Activated CD4-positive, alpha-beta memory T cell treated with anti-CD3 and anti-CD28 coated beads for 36 hours (primary cell): ENCODE measurements at regions of chr1 and their contacts with region 1.

Region 1: GRCh38 chr1:230978491-230979388 is at the starts of genes ARV1 and TTC13:
- DNase-seq: peak; percentile 98
- H3K4me3 Mint-ChIP-seq: peak within 1 kb of the TSS; percentile 99
- H3K27ac Mint-ChIP-seq: peak within 1 kb of the TSS; percentile 94
- H3K4me1 Mint-ChIP-seq: peaks cover 29% of the 10 kb centered on the region
- H3K27me3 Mint-ChIP-seq: no peaks in the 10 kb centered on the region
- total RNA-seq, gene ARV1: 12.7 to 13.8 TPM
- total RNA-seq, gene TTC13: 17.3 to 18.3 TPM

Region 2: GRCh38 chr1:230066466-230067404 is 912.0 kb before region 1 on chr1 and contains the start of gene GALNT2:
- CTCF ChIA-PET with region 1: no interaction called
- POLR2A ChIA-PET with region 1: no interaction called
- intact Hi-C with region 1: loop called (anchors 5 kb)
- DNase-seq: peak; percentile 92
- H3K4me3 Mint-ChIP-seq: peak within 1 kb of the TSS; percentile 86
- H3K27ac Mint-ChIP-seq: peak within 1 kb of the TSS; percentile 83
- H3K4me1 Mint-ChIP-seq: peaks cover 37% of the 10 kb centered on the region
- H3K27me3 Mint-ChIP-seq: peaks cover 2% of the 10 kb centered on the region
- total RNA-seq, gene GALNT2: 49.5 to 51.0 TPM

Region 3: DNA sequence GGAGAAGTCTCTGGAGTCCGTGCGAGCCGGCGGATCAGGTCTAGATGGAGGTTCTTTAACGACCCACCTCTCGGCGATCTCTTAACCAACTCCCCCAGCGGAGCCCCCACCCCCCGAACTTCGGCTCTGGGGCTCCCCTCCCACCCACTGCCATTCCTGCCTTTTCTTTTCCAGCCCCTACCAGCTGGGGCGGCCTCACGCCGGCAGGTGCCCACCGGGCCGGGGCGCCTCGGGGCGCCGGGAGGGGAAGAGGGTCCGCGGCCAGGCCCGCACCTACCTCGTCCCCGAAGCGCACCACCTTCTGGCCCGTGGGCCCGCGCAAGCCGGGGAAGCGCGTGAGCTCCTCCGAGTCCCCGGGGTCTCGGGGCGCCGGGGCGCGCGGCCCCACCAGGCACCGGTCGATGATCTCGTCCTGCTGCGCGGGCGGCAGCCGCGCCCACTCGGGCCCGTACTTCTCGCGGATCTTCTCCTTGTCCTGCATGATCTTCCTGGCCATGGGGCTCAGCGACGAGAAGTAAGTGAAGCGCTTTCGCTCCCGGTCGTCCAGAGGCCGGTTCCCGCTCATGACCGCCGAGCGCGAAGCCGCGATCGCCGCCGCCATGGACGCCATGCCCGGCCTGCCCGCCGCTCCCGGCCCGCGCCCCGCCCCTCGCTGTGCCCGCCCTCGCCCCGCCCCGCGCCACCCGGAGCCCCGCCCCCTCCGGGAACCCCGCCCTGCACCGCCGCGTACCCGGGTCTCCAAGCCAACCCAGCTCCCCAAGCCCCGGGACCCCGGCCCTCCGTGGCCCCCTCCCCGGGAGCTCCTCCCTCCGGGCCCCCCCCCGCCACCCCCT is 110.6 kb before region 1 on chr1 and contains the start of gene C1orf198:
- CTCF ChIA-PET with region 1: no interaction called
- POLR2A ChIA-PET with region 1: no interaction called
- intact Hi-C with region 1: loop called (anchors 5 kb)
- DNase-seq: peak; percentile 83
- H3K4me3 Mint-ChIP-seq: peak within 1 kb of the TSS; percentile 82
- H3K27ac Mint-ChIP-seq: no peak within 1 kb of the TSS
- H3K4me1 Mint-ChIP-seq: peaks cover 26% of the 10 kb centered on the region
- H3K27me3 Mint-ChIP-seq: peaks cover 24% of the 10 kb centered on the region
- total RNA-seq, gene C1orf198: 6.4 to 7.2 TPM

Region 4: GRCh38 chr1:231011360-231011759 is 32.6 kb after region 1 on chr1:
- CTCF ChIA-PET with region 1: no interaction called
- POLR2A ChIA-PET with region 1: no interaction called
- intact Hi-C with region 1: no loop called
- DNase-seq: no peak
- H3K4me3 Mint-ChIP-seq: no peak overlapping the region
- H3K27ac Mint-ChIP-seq: no peak overlapping the region
- H3K4me1 Mint-ChIP-seq: no peaks in the 10 kb centered on the region
- H3K27me3 Mint-ChIP-seq: no peaks in the 10 kb centered on the region

Region 5: GRCh38 chr1:231040019-231040799 is 61.5 kb after region 1 on chr1 and contains the start of gene FAM89A:
- CTCF ChIA-PET with region 1: interaction called, 5 read pairs
- POLR2A ChIA-PET with region 1: interaction called, 5 read pairs
- intact Hi-C with region 1: loop called (anchors 2 kb)
- DNase-seq: peak; percentile 81
- H3K4me3 Mint-ChIP-seq: peak within 1 kb of the TSS; percentile 74
- H3K27ac Mint-ChIP-seq: no peak within 1 kb of the TSS
- H3K4me1 Mint-ChIP-seq: peaks cover 29% of the 10 kb centered on the region
- H3K27me3 Mint-ChIP-seq: no peaks in the 10 kb centered on the region
- total RNA-seq, gene FAM89A: 14.3 to 15.1 TPM

Region 6: GRCh38 chr1:231121533-231121932 is 142.8 kb after region 1 on chr1:
- CTCF ChIA-PET with region 1: no interaction called
- POLR2A ChIA-PET with region 1: no interaction called
- intact Hi-C with region 1: no loop called
- DNase-seq: no peak
- H3K4me3 Mint-ChIP-seq: no peak overlapping the region
- H3K27ac Mint-ChIP-seq: no peak overlapping the region
- H3K4me1 Mint-ChIP-seq: no peaks in the 10 kb centered on the region
- H3K27me3 Mint-ChIP-seq: peaks cover 1% of the 10 kb centered on the region

Region 7: DNA sequence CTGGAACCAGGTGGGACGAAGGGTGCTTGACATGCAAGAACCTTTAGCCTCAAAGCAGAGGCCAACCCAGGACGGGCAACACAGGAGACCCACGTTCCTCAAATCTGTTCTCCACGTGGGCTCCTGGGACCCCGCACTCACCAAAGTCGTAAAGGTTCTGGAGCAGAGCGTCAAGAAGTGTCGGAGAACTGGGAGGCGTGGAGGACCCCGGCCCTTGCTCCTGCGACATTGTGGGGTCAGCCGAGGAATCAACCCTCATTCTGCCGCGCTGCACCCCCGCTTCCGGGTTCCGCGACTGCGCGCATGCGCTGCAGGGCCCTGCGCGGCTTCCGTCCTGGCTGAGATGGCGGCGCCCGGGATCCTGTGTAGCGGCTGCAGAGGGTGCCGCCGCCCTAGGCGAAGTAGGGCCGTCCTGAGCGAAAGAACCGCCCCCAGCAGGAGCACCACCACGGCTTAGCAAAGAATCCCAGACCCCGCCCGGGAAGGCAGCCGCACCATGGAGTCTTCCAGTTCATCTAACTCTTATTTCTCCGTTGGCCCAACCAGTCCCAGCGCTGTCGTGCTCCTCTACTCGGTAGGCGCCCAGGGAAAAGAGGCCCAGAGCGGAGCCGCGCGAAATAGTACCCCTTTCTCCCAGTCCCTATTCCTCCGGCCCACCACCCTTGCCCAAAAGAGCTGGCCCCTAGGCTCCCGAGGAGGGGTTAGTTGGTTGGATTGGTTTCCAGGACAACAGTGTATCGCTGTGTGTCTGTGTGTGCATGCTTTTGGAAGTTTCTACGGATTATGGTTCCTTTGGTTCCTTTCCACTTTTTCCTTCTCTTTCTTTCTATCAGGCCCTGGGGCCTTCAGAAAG is 262.4 kb after region 1 on chr1 and contains the start of gene GNPAT:
- CTCF ChIA-PET with region 1: no interaction called
- POLR2A ChIA-PET with region 1: no interaction called
- intact Hi-C with region 1: loop called (anchors 2 kb)
- DNase-seq: peak; percentile 93
- H3K4me3 Mint-ChIP-seq: peak within 1 kb of the TSS; percentile 97
- H3K27ac Mint-ChIP-seq: peak within 1 kb of the TSS; percentile 92
- H3K4me1 Mint-ChIP-seq: peaks cover 54% of the 10 kb centered on the region
- H3K27me3 Mint-ChIP-seq: no peaks in the 10 kb centered on the region
- total RNA-seq, gene GNPAT: 56.2 to 60.3 TPM

Region 8: DNA sequence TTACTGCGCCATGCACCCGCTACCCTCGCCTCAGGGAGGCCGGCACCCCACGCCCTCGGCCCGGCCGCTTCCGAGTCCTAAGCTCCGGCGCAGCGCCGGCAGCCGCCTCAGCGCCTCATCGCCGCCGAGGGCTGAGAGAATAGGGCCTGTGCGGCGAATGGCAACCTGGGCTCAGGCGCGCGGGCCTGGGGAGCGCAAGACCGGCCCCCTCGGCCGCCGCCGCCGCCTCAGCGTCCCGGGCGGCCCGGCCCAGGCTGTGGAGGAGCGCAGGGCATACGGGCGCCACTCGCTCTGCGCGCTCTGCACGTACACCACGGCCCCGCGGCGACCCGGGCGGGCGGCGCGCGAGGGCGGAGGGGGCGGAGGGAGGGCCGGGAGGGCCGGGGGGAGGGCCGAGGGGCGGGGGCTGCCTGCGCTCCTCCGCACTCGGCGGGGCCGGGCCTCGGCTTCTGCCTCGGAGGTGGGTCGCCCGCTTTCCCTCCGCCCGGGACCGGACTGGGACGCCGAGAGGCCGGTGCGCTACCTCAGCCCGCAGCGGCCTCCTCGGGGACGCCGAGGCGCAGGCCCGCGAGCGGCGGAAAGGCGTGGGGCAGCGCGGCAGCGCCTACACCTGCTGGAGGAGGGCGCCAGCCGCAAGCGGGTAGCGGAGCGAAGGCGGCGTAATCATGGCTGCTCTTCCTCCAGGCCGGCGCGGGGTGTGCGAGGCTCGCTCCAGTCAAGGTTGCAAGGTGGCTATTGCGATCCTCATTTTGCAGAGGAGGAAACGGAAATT is 443.4 kb after region 1 on chr1 and contains the start of gene EGLN1:
- CTCF ChIA-PET with region 1: no interaction called
- POLR2A ChIA-PET with region 1: no interaction called
- intact Hi-C with region 1: loop called (anchors 5 kb)
- DNase-seq: peak; percentile 87
- H3K4me3 Mint-ChIP-seq: peak within 1 kb of the TSS; percentile 84
- H3K27ac Mint-ChIP-seq: peak within 1 kb of the TSS; percentile 81
- H3K4me1 Mint-ChIP-seq: peaks cover 33% of the 10 kb centered on the region
- H3K27me3 Mint-ChIP-seq: no peaks in the 10 kb centered on the region
- total RNA-seq, gene EGLN1: 15.8 to 16.2 TPM

Region 9: DNA sequence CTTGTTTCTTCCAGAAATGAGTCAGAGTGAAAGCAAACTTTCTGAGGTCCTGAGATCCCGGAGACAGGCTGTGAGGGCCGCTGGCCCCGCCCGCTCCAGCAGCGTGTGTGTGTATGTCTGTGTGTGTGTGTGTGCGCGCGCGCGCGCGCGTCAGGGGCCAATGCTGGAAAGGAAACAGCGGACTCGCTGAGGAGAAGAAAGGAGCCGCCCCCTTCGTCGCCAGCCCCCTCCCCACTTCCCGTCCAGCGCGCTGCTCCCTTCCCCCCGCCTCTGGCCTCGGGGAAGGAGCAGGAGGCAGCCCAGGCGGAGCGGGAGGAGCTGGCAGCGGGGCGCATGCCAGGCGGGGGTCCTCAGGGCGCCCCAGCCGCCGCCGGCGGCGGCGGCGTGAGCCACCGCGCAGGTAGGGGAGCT is 647.8 kb after region 1 on chr1 and contains the start of gene DISC1:
- CTCF ChIA-PET with region 1: no interaction called
- POLR2A ChIA-PET with region 1: no interaction called
- intact Hi-C with region 1: loop called (anchors 10 kb)
- DNase-seq: peak; percentile 78
- H3K4me3 Mint-ChIP-seq: peak within 1 kb of the TSS; percentile 78
- H3K27ac Mint-ChIP-seq: peak within 1 kb of the TSS; percentile 50
- H3K4me1 Mint-ChIP-seq: peaks cover 29% of the 10 kb centered on the region
- H3K27me3 Mint-ChIP-seq: no peaks in the 10 kb centered on the region
- total RNA-seq, gene DISC1: 2.8 to 3.9 TPM